A673 (cell line): ENCODE measurements at regions of chr1 and their contacts with region 1.

Region 1: DNA sequence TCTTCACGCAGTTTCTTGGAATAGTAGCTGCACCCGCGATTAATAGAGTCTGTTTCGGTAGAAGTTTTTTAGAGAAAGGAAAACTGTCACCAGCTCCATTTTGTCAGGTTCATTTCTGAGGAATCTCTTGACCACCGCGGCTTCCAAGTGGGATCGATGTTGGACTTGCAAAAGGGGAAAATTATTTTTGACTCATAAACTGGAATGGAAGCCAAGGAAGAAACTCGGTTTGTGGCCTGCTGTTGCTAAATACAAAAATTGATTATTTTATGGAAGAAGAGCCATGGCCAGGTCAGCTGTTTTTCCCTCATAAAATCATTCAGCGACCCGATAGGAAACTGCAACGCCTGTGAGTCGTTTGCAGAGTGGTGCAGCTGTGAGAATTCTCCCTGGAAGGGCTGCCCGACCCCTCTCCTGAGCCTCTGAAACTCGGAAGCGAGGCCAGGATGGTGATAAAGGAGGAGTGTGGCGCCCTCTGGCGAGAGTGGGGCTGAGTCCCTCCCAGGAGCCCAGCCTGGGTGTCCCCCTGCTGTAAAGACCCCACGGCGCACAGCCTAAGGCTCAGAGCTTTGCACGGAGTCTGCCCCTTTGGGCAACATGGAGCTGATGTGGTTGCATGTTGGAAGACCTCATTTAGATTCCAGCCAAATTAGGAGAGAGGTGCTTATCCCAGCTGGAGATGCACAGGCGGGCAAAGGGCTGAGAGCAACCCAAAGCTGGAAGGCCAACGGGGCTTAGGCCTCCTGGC is 83.6 kb upstream of the SLC25A33 start:
- DNase-seq: peak; percentile 73
- H3K4me3 ChIP-seq: no peak overlapping the region
- H3K27ac ChIP-seq: no peak overlapping the region
- H3K4me1 ChIP-seq: no peaks in the 10 kb centered on the region
- H3K27me3 ChIP-seq: no peaks in the 10 kb centered on the region
- CTCF ChIP-seq: peak; percentile 87

Region 2: DNA sequence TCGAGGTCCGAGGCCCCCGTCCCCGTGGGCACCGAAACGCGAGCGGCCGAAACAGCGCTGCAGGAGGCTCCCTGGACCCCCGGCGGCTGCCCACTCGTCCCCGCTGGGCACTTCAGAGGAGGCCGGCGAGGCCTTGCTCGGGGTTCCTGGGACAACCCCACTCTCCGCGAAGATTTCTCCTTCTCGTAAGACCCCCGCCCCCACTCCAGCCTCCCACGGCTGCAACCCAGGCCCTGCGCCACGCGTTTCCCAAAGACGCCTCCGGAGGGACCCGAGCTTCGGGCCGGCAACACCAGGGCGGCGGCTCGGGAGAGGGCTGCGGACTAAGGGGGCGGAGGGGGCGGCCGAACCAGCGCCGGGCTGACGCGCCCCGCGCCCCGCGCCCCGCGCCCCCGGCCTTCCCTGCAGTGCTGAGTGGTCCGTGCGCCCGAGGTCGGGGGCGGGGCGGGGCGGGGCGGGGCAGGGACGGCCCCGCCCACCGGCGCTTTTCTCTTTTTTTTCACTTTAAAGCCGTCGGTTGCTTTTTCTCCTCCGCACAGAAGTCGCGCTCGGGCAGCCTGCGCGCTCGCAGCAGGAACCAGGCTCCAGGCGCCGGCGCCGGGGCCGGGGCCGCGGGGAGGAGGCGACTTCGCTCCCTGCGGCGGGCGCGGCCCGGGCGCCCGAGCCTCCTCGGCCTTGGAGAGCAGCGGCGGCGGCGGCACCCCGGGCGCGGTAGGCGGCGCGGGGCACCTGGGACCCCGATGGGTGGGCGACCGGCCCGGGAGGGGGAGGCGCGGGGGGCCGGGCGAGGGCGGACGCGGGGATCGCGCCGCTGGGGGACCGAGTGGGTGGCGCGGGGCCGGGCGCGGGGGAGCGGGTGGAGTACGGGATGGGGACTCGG is 163.1 kb before region 1 on chr1 and contains the start of gene SPSB1:
- CTCF ChIA-PET with region 1: interaction called, 12 read pairs
- POLR2A ChIA-PET with region 1: no interaction called
- intact Hi-C with region 1: loop called (anchors 5 kb)
- DNase-seq: peak; percentile 90
- H3K4me3 ChIP-seq: peak within 1 kb of the TSS; percentile 84
- H3K27ac ChIP-seq: peak within 1 kb of the TSS; percentile 73
- H3K4me1 ChIP-seq: peaks cover 21% of the 10 kb centered on the region
- H3K27me3 ChIP-seq: no peaks in the 10 kb centered on the region
- CTCF ChIP-seq: no peak
- total RNA-seq, gene SPSB1: 7.5 and 11.8 TPM in 2 replicates

Region 3: DNA sequence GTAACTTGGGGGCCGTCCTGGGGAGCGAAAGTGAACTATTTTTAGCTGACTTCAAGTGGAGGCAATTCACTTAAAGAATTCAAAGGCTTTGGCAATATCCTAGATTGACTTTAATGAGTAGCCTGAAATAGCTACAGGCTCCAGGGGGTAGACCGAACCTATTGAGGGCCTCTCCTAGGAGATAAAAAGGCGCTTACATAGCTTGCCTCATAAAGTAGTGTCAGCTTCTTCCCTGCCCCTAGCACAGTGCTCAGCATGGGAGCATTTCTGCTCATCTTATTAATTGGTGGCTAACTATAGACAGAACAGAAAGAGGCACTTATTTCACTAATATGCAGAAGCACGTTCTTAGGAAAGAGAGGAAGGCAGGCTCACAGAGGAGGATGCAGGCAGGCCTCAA is 466.7 kb after region 1 on chr1:
- CTCF ChIA-PET with region 1: no interaction called
- POLR2A ChIA-PET with region 1: no interaction called
- intact Hi-C with region 1: no loop called
- DNase-seq: peak; percentile 77
- H3K4me3 ChIP-seq: no peak overlapping the region
- H3K27ac ChIP-seq: no peak overlapping the region
- H3K4me1 ChIP-seq: peaks cover 14% of the 10 kb centered on the region
- H3K27me3 ChIP-seq: no peaks in the 10 kb centered on the region
- CTCF ChIP-seq: no peak